MCF 10A (cell line): ENCODE measurements at regions of chr11 and their contacts with region 1.

Region 1: GRCh38 chr11:102666331-102666957 is 39.1 kb downstream of the MMP27 start:
- DNase-seq: peak; percentile 63
- H3K4me3 Mint-ChIP-seq: no peak overlapping the region
- H3K27ac Mint-ChIP-seq: no peak overlapping the region
- H3K4me1 Mint-ChIP-seq: no peaks in the 10 kb centered on the region
- H3K27me3 Mint-ChIP-seq: no peaks in the 10 kb centered on the region
- CTCF ChIP-seq: peak; percentile 89

Region 2: GRCh38 chr11:102293873-102294601 is 372.4 kb before region 1 on chr11:
- CTCF ChIA-PET with region 1: interaction called, 16 read pairs
- POLR2A ChIA-PET with region 1: no interaction called
- intact Hi-C with region 1: loop called (anchors 5 kb)
- DNase-seq: peak; percentile 70
- H3K4me3 Mint-ChIP-seq: peak overlapping the region; percentile 35
- H3K27ac Mint-ChIP-seq: peak overlapping the region; percentile 7
- H3K4me1 Mint-ChIP-seq: peaks cover 18% of the 10 kb centered on the region
- H3K27me3 Mint-ChIP-seq: no peaks in the 10 kb centered on the region
- CTCF ChIP-seq: peak; percentile 52

Region 3: GRCh38 chr11:102396708-102397563 is 269.5 kb before region 1 on chr11:
- CTCF ChIA-PET with region 1: interaction called, 36 read pairs
- POLR2A ChIA-PET with region 1: no interaction called
- intact Hi-C with region 1: no loop called
- DNase-seq: no peak
- H3K4me3 Mint-ChIP-seq: no peak overlapping the region
- H3K27ac Mint-ChIP-seq: no peak overlapping the region
- H3K4me1 Mint-ChIP-seq: peaks cover 5% of the 10 kb centered on the region
- H3K27me3 Mint-ChIP-seq: no peaks in the 10 kb centered on the region
- CTCF ChIP-seq: no peak

Region 4: GRCh38 chr11:102592634-102593581 is 73.5 kb before region 1 on chr11:
- CTCF ChIA-PET with region 1: no interaction called
- POLR2A ChIA-PET with region 1: no interaction called
- intact Hi-C with region 1: loop called (anchors 1 kb)
- DNase-seq: peak; percentile 63
- H3K4me3 Mint-ChIP-seq: no peak overlapping the region
- H3K27ac Mint-ChIP-seq: no peak overlapping the region
- H3K4me1 Mint-ChIP-seq: no peaks in the 10 kb centered on the region
- H3K27me3 Mint-ChIP-seq: no peaks in the 10 kb centered on the region
- CTCF ChIP-seq: peak; percentile 50

Region 5: DNA sequence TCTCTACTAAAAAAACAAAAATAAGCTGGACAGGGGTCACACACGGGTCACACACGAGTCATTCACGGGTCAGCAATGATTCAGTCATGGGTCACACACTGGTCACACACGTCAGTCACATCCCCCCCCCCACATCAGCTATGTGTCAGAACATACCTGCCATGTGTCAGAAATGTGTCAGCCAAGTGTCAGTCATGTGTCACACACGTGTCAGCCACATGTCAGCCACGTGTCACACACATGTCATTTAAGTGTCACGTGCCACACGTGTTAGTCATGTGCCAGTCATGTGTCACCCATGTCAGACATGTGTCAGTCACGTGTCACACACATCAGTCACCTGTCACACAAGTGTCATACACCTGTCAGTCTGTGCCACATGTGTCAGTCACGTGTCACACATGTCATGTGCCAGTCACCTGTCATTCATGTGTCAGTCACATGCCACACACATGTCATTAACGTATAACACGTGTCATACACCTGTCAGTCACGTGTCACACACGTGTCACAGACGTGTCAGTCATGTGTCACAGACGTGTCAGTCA is 12.6 kb before region 1 on chr11:
- CTCF ChIA-PET with region 1: interaction called, 25 read pairs
- POLR2A ChIA-PET with region 1: interaction called, 4 read pairs
- intact Hi-C with region 1: no loop called
- DNase-seq: peak; percentile 16
- H3K4me3 Mint-ChIP-seq: no peak overlapping the region
- H3K27ac Mint-ChIP-seq: no peak overlapping the region
- H3K4me1 Mint-ChIP-seq: no peaks in the 10 kb centered on the region
- H3K27me3 Mint-ChIP-seq: peaks cover 11% of the 10 kb centered on the region
- CTCF ChIP-seq: no peak

Region 6: GRCh38 chr11:103202048-103202651 is 535.7 kb after region 1 on chr11:
- CTCF ChIA-PET with region 1: no interaction called
- POLR2A ChIA-PET with region 1: no interaction called
- intact Hi-C with region 1: no loop called
- DNase-seq: peak; percentile 54
- H3K4me3 Mint-ChIP-seq: no peak overlapping the region
- H3K27ac Mint-ChIP-seq: no peak overlapping the region
- H3K4me1 Mint-ChIP-seq: no peaks in the 10 kb centered on the region
- H3K27me3 Mint-ChIP-seq: no peaks in the 10 kb centered on the region
- CTCF ChIP-seq: peak; percentile 37